Right cardiac atrium (tissue), 5 donors: ENCODE measurements at regions of chr14 and their contacts with region 1.

Region 1: DNA sequence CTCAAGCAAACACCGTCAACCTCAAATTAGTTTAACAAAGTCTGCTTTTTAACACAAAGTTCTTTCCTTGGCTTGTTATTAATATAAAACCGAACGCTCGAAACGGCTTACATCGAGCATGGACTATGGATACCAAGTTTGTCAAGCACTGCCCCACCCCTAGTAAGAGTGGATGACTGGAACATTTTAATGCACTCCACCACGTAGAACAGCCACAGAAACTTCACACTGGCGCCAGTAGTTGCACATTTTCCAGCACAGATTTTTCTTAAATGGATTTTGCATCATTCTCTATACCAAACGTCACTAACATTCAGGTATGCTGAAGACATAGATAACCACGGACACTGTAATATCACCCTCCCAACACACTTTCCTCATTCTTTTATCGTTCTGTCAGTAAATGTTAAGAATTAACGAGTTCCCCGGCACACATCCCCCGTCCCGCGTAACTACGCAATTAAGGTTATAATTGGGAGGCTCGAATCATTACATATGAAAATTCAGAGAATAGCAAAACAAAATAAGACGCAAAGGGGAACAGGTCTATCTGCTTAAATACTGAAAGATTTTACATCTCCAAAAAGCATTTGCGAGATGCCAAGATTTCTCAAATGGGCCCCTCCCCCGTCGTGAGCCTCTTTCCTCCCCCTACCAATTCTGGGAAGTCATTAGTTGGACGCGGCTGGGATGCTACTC is 990 bp downstream of the FERMT2 start:
- DNase-seq: no peak
- ATAC-seq: peak; percentile 36 to 52
- H3K4me3 ChIP-seq: peak overlapping the region; percentile 87
- H3K27ac ChIP-seq: peak overlapping the region; percentile 97
- H3K4me1 ChIP-seq: no peaks in the 10 kb centered on the region
- H3K27me3 ChIP-seq: no peaks in the 10 kb centered on the region

Region 2: DNA sequence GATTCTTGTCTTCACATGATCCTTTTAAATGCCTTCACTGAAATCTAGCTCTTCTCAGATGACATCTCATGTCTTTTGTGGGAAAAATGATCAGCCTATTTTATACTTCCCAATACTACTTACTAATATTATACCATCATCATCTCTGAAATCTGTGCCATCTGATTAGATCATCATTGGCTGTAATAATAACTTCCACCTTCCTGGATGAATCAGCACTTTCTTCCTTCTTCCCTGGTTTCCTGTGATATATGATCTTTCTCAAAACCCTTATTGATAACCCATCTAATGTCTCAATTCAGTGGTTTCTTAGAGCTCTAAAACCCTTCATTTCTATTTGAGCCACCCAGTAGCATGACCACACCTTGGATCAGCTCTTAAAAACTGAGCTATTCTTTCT is 366.3 kb before region 1 on chr14:
- intact Hi-C with region 1: no loop called
- DNase-seq: no peak
- ATAC-seq: no peak
- H3K4me3 ChIP-seq: no peak overlapping the region
- H3K27ac ChIP-seq: no peak overlapping the region
- H3K4me1 ChIP-seq: no peaks in the 10 kb centered on the region
- H3K27me3 ChIP-seq: no peaks in the 10 kb centered on the region

Region 3: GRCh38 chr14:52879958-52880357 is 69.9 kb before region 1 on chr14:
- intact Hi-C with region 1: loop called in 1 of 4 experiments (anchors 10 kb)
- DNase-seq: no peak
- ATAC-seq: peak in 1 of 2 donors; percentile 34
- H3K4me3 ChIP-seq: no peak overlapping the region
- H3K27ac ChIP-seq: no peak overlapping the region
- H3K4me1 ChIP-seq: peaks cover 3% of the 10 kb centered on the region
- H3K27me3 ChIP-seq: no peaks in the 10 kb centered on the region

Region 4: DNA sequence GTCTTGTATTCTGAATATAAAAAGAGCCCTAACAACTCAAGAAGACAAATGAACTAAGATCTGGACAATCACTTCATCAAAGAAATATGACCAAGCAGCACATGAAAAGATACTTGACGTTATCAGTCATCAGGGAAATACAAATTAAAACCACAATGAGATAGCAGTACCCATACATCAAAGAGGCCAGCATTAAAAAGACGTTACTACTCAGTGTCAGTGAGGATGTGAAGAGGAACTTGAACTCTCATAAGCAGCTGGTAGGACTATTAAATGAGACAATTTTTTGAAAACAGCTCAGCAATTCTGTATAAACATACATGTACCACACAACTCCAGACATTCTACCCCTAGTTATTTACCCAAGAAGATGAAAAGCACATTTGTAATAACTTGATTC is 54.9 kb before region 1 on chr14:
- intact Hi-C with region 1: loop called in 1 of 4 experiments (anchors 10 kb)
- DNase-seq: no peak
- ATAC-seq: no peak
- H3K4me3 ChIP-seq: no peak overlapping the region
- H3K27ac ChIP-seq: no peak overlapping the region
- H3K4me1 ChIP-seq: peaks cover 1% of the 10 kb centered on the region
- H3K27me3 ChIP-seq: no peaks in the 10 kb centered on the region